Activated CD4-positive, alpha-beta memory T cell treated with anti-CD3 and anti-CD28 coated beads for 36 hours (primary cell): ENCODE measurements at regions of chr1 and their contacts with region 1.

Region 1: GRCh38 chr1:229286099-229286766 is 15.3 kb downstream of the RAB4A start:
- DNase-seq: no peak
- H3K4me3 Mint-ChIP-seq: no peak overlapping the region
- H3K27ac Mint-ChIP-seq: no peak overlapping the region
- H3K4me1 Mint-ChIP-seq: peaks cover 45% of the 10 kb centered on the region
- H3K27me3 Mint-ChIP-seq: no peaks in the 10 kb centered on the region

Region 2: GRCh38 chr1:229440851-229441537 is 154.8 kb after region 1 on chr1:
- CTCF ChIA-PET with region 1: interaction called, 3 read pairs
- POLR2A ChIA-PET with region 1: interaction called, 4 read pairs
- intact Hi-C with region 1: loop called (anchors 1 kb)
- DNase-seq: no peak
- H3K4me3 Mint-ChIP-seq: no peak overlapping the region
- H3K27ac Mint-ChIP-seq: peak overlapping the region; percentile 56
- H3K4me1 Mint-ChIP-seq: peaks cover 22% of the 10 kb centered on the region
- H3K27me3 Mint-ChIP-seq: peaks cover 17% of the 10 kb centered on the region